MCF 10A (cell line): ENCODE measurements at regions of chr17 and their contacts with region 1.

Region 1: DNA sequence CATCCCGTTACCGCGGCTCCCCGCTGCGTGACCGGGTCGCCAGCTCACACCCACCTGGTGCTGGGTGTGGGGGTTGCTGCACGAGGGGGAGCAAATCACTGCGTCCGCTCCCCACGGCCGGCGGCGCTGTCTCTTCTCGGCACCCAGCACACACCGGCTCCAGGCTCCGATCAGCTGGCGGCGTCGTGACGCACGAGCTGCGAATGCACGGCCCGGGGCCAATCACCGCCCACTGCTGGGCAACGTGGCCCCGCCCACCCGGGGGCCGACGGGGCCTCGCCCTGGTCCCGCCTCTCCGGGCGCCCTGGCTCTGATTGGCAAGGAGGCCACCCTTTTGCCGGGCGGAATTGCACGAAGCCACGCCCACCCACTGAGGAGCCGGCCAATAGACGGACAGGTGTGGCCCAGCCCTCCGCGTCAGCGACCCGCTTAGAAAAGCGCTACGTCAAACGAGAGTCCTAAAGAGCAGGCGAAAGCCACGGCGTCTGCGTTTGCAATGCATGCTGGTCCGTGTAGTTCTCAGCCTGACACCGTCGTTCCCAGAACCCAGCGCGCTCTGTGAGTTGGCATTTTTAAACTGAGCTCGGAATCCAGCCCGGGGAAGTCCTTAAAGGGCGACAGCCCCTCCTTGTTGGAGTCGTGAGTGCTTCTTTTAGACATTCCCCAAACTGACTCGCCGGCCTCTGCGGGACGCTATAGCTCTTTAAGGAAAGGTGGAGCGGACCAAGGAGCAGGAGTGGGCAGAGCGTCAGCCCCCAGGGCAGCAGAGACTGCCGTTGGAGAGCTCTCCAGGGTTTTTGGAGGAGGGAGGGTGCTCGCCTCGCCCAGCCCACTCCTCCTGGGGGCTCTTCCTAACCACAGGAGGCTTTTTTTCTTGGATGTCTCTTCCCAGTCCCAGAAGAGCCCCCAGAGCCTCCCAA is 6.2 kb upstream of the TLCD2 start:
- DNase-seq: peak; percentile 100
- H3K4me3 Mint-ChIP-seq: peak overlapping the region; percentile 87
- H3K27ac Mint-ChIP-seq: peak overlapping the region; percentile 93
- H3K4me1 Mint-ChIP-seq: peaks cover 24% of the 10 kb centered on the region
- H3K27me3 Mint-ChIP-seq: no peaks in the 10 kb centered on the region
- CTCF ChIP-seq: no peak

Region 2: GRCh38 chr17:1474402-1475189 is 241.7 kb before region 1 on chr17:
- CTCF ChIA-PET with region 1: no interaction called
- POLR2A ChIA-PET with region 1: no interaction called
- intact Hi-C with region 1: no loop called
- DNase-seq: no peak
- H3K4me3 Mint-ChIP-seq: no peak overlapping the region
- H3K27ac Mint-ChIP-seq: no peak overlapping the region
- H3K4me1 Mint-ChIP-seq: no peaks in the 10 kb centered on the region
- H3K27me3 Mint-ChIP-seq: no peaks in the 10 kb centered on the region
- CTCF ChIP-seq: no peak

Region 3: GRCh38 chr17:1648963-1649843 is 67.1 kb before region 1 on chr17:
- CTCF ChIA-PET with region 1: interaction called, 7 read pairs
- POLR2A ChIA-PET with region 1: interaction called, 39 read pairs
- intact Hi-C with region 1: loop called (anchors 2 kb)
- DNase-seq: peak; percentile 89
- H3K4me3 Mint-ChIP-seq: peak overlapping the region; percentile 70
- H3K27ac Mint-ChIP-seq: peak overlapping the region; percentile 23
- H3K4me1 Mint-ChIP-seq: peaks cover 4% of the 10 kb centered on the region
- H3K27me3 Mint-ChIP-seq: no peaks in the 10 kb centered on the region
- CTCF ChIP-seq: peak; percentile 82

Region 4: GRCh38 chr17:1684378-1685189 is 31.8 kb before region 1 on chr17 and contains the start of gene PRPF8:
- CTCF ChIA-PET with region 1: interaction called, 5 read pairs
- POLR2A ChIA-PET with region 1: interaction called, 112 read pairs
- intact Hi-C with region 1: loop called (anchors 1 kb)
- DNase-seq: peak; percentile 97
- H3K4me3 Mint-ChIP-seq: peak within 1 kb of the TSS; percentile 88
- H3K27ac Mint-ChIP-seq: peak within 1 kb of the TSS; percentile 94
- H3K4me1 Mint-ChIP-seq: peaks cover 24% of the 10 kb centered on the region
- H3K27me3 Mint-ChIP-seq: no peaks in the 10 kb centered on the region
- CTCF ChIP-seq: no peak
- total RNA-seq, gene PRPF8: 239 and 261 TPM in 2 replicates

Region 5: GRCh38 chr17:1783834-1784611 is 67.7 kb after region 1 on chr17:
- CTCF ChIA-PET with region 1: interaction called, 211 read pairs
- POLR2A ChIA-PET with region 1: interaction called, 44 read pairs
- intact Hi-C with region 1: loop called (anchors 1 kb)
- DNase-seq: peak; percentile 62
- H3K4me3 Mint-ChIP-seq: no peak overlapping the region
- H3K27ac Mint-ChIP-seq: peak overlapping the region; percentile 79
- H3K4me1 Mint-ChIP-seq: peaks cover 28% of the 10 kb centered on the region
- H3K27me3 Mint-ChIP-seq: no peaks in the 10 kb centered on the region
- CTCF ChIP-seq: peak; percentile 74

Region 6: GRCh38 chr17:1829592-1830257 is 113.4 kb after region 1 on chr17 and contains the starts of genes RPA1 and SMYD4:
- CTCF ChIA-PET with region 1: interaction called, 6 read pairs
- POLR2A ChIA-PET with region 1: interaction called, 39 read pairs
- intact Hi-C with region 1: loop called (anchors 2 kb)
- DNase-seq: peak; percentile 86
- H3K4me3 Mint-ChIP-seq: peak within 1 kb of the TSS; percentile 86
- H3K27ac Mint-ChIP-seq: peak within 1 kb of the TSS; percentile 85
- H3K4me1 Mint-ChIP-seq: peaks cover 25% of the 10 kb centered on the region
- H3K27me3 Mint-ChIP-seq: no peaks in the 10 kb centered on the region
- CTCF ChIP-seq: no peak
- total RNA-seq, gene RPA1: 60.3 and 62.7 TPM in 2 replicates
- total RNA-seq, gene SMYD4: 8.3 and 13.6 TPM in 2 replicates